CD14-positive monocyte (primary cell): ENCODE measurements at regions of chr17 and their contacts with region 1.

Region 1: GRCh38 chr17:58517734-58518609 is 3.5 kb upstream of the MTMR4 start:
- DNase-seq: peak; percentile 100
- H3K4me3 ChIP-seq: peak overlapping the region; percentile 75 to 100 (median 76)
- H3K4me3 Mint-ChIP-seq: peak overlapping the region; percentile 96 to 98
- H3K27ac ChIP-seq: peak overlapping the region; percentile 88 to 96
- H3K27ac Mint-ChIP-seq: peak overlapping the region; percentile 95 to 99 (median 98)
- H3K4me1 ChIP-seq: peaks cover 37 to 52% of the 10 kb centered on the region in 2 donors
- H3K4me1 Mint-ChIP-seq: peaks cover 46% of the 10 kb centered on the region
- H3K27me3 ChIP-seq: no peaks in the 10 kb centered on the region
- H3K27me3 Mint-ChIP-seq: peaks cover 0 to 8% (median 4%) of the 10 kb centered on the region in 3 donors
- CTCF ChIP-seq: no peak

Region 2: GRCh38 chr17:58337600-58338453 is 180.1 kb before region 1 on chr17:
- intact Hi-C with region 1: loop called in 1 of 2 experiments (anchors 10 kb)
- DNase-seq: peak; percentile 93 to 94 (median 94)
- H3K4me3 ChIP-seq: peak overlapping the region; percentile 42 to 100 (median 48)
- H3K4me3 Mint-ChIP-seq: peak overlapping the region; percentile 90 to 100
- H3K27ac ChIP-seq: peak overlapping the region; percentile 98 to 100
- H3K27ac Mint-ChIP-seq: peak overlapping the region; percentile 99 to 100 (median 99)
- H3K4me1 ChIP-seq: peaks cover 95 to 100% of the 10 kb centered on the region in 2 donors
- H3K4me1 Mint-ChIP-seq: peaks cover 87% of the 10 kb centered on the region
- H3K27me3 ChIP-seq: no peaks in the 10 kb centered on the region
- H3K27me3 Mint-ChIP-seq: peaks cover 0 to 2% (median 0%) of the 10 kb centered on the region in 3 donors
- CTCF ChIP-seq: no peak

Region 3: DNA sequence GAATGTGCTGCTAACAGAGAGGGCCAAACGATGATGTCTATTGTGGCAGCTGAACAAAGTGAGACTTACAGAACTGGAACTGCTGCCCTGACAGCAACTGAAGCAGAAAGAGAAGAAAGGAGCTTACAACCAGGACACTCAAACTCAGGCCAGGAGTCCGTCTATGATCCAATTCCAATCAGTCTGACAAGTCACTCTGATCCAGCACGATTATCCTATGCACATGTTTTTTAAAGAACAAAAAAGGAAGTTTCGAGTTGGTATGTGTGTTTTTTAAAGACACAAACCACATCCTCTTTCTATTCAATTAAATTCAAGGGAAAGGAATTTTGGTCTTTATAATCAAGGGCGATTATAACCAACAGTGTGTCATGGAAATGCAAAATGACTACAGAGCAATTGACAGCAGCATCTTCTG is 38.9 kb after region 1 on chr17:
- intact Hi-C with region 1: no loop called
- DNase-seq: peak; percentile 35 to 50 (median 42)
- H3K4me3 ChIP-seq: peak overlapping the region in 1 of 3 experiments; percentile 49
- H3K4me3 Mint-ChIP-seq: peak overlapping the region; percentile 62 to 84
- H3K27ac ChIP-seq: peak overlapping the region in 1 of 2 donors; percentile 50
- H3K27ac Mint-ChIP-seq: peak overlapping the region; percentile 11 to 88 (median 72)
- H3K4me1 ChIP-seq: peaks cover 18 to 25% of the 10 kb centered on the region in 2 donors
- H3K4me1 Mint-ChIP-seq: peaks cover 19% of the 10 kb centered on the region
- H3K27me3 ChIP-seq: no peaks in the 10 kb centered on the region
- H3K27me3 Mint-ChIP-seq: peaks cover 4 to 10% (median 6%) of the 10 kb centered on the region in 3 donors
- CTCF ChIP-seq: no peak

Region 4: DNA sequence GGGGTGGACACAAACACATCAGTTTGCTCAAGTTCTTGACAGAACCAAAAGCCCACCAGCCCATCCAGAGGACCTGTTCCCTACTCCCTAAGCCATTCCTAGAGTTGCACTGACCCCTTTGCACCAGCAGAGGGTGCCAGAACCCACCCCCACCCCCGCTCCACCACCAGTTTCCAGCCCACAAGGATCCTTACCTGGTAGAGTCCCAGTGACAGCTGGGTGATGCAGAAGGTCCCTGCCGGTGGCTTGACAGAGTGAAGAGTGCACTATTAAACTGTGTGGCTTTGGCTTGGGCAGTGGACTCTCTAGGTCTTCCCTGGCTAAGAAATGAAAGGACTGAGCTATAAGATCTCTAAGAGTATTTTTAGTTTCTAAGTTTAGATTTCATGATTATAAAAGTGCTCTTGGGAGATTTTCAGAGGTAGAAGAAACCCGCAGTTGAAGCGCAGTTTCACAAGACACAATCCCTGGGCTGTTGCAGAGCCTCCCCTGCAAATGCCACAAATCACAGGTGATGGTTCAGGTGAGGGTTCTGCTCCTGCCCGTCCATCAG is 69.8 kb after region 1 on chr17:
- intact Hi-C with region 1: loop called in 1 of 2 experiments (anchors 10 kb)
- DNase-seq: peak; percentile 41 to 61 (median 55)
- H3K4me3 ChIP-seq: no peak overlapping the region
- H3K4me3 Mint-ChIP-seq: peak overlapping the region in 1 of 2 donors; percentile 42
- H3K27ac ChIP-seq: no peak overlapping the region
- H3K27ac Mint-ChIP-seq: no peak overlapping the region
- H3K4me1 ChIP-seq: no peaks in the 10 kb centered on the region
- H3K4me1 Mint-ChIP-seq: no peaks in the 10 kb centered on the region
- H3K27me3 ChIP-seq: no peaks in the 10 kb centered on the region
- H3K27me3 Mint-ChIP-seq: peaks cover 2 to 8% (median 5%) of the 10 kb centered on the region in 3 donors
- CTCF ChIP-seq: peak; percentile 97

Region 5: DNA sequence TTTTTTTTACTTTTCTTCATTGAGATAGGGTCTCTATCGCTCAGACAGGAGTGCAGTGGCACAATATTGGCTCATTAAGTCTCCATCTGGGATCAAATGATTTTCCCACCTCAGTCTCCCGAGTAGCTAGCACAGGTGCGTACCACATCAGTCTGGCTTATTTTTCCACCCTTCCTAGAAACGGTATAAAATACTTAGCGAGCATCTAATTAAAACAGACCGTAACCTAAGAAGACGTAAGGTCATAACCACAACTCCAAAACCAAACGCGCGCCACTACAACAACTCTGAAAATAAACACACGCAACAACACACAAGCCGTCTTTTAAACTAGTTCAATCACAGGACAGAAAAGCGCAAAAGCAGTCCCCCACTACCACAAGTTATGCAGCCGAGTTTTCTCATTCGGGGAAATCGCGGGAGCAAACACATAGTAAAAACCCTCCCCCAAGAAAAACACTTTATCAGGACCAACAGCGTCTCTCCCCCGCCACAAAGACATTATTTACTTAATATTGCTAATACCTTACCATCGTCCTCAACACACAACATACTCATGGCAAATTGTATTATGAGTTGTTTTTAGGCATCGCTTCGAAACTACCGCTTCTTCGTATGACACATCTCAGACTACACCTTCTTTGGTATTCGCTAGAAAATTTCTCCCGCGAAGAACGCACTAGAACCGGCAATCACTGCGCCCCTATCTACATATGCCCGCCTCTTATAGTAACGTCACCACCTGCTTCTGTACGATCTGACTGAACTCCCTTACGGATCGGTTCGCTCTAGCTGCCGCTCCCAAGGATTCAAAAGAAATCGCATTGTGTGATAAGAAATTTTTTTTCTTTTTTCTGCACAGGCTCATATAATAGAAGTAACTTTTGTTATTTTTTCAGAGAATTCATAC is 141.1 kb after region 1 on chr17:
- intact Hi-C with region 1: loop called in 1 of 2 experiments (anchors 2 kb)
- DNase-seq: peak; percentile 89 to 95 (median 93)
- H3K4me3 ChIP-seq: peak overlapping the region; percentile 39 to 76 (median 73)
- H3K4me3 Mint-ChIP-seq: peak overlapping the region; percentile 70 to 86
- H3K27ac ChIP-seq: peak overlapping the region; percentile 42 to 87
- H3K27ac Mint-ChIP-seq: peak overlapping the region; percentile 96 to 100 (median 99)
- H3K4me1 ChIP-seq: peaks cover 15 to 17% of the 10 kb centered on the region in 2 donors
- H3K4me1 Mint-ChIP-seq: peaks cover 19% of the 10 kb centered on the region
- H3K27me3 ChIP-seq: no peaks in the 10 kb centered on the region
- H3K27me3 Mint-ChIP-seq: peaks cover 4 to 11% (median 6%) of the 10 kb centered on the region in 3 donors
- CTCF ChIP-seq: no peak

Region 6: DNA sequence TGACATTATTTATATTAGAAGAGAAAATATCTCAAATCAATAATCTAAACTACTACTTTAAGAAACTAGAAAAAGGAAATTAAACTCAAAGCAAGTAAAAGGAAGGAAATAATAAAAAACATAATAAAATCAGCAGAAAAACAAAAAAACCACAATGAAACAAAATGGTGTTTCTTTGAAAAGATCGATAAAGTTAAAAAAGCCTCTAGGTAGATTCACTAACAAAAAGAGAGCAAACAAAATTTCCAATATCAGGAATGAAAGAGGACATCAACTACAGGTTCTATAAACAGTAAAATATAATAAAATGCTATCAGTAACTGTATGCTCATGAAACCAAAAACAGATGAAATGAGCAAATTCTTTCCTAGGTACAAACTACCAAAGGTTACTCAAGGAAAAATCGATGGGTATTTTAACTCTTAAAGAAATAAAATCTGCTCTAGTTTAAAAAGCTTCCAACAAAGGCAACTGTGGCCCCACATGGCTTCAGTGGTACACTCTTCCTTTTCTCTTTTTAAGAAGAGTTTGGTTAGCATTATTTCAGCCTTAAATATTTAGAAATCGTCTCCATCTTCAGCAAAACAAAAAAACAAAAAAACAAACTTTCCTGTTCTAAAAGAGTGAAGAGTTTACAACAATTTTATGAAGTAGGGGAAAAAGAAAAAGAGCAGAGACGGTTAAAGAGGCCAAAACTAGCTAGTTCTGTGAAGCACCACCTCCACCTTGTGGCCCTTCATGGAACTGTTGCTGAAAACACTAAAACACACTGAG is 486.6 kb after region 1 on chr17:
- intact Hi-C with region 1: loop called (anchors 2 to 5 kb)
- DNase-seq: peak; percentile 49 to 69 (median 58)
- H3K4me3 ChIP-seq: no peak overlapping the region
- H3K4me3 Mint-ChIP-seq: peak overlapping the region in 1 of 2 donors; percentile 48
- H3K27ac ChIP-seq: no peak overlapping the region
- H3K27ac Mint-ChIP-seq: peak overlapping the region in 4 of 7 donors; percentile 27 to 80 (median 68)
- H3K4me1 ChIP-seq: peaks cover 30 to 41% of the 10 kb centered on the region in 2 donors
- H3K4me1 Mint-ChIP-seq: peaks cover 32% of the 10 kb centered on the region
- H3K27me3 ChIP-seq: no peaks in the 10 kb centered on the region
- H3K27me3 Mint-ChIP-seq: no peaks in the 10 kb centered on the region
- CTCF ChIP-seq: peak; percentile 95